ENCODE measurements at regions of chr4 and their contacts with region 1.

Region 1: DNA sequence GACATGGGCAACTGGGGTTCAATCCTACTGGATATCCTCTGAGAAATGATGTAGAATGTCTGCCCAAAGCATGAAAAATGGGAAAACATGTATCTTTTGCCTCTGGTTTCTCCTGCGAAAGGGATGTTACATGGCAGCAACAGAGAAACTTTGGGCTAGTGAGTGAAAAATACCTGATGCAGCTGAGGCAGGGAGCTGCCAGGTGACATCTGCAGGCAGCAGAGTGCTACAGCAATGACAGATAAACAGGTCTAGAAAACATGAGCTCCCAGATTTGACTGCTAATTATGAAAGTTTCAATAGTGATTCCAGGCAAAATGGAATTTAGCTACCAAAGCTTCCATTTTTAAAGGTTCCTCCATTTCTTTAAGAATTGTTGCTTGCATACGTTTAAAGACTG is 4.8 kb upstream of the CXCL1 start:
- DNase-seq: no peak
- H3K4me3 ChIP-seq: no peak overlapping the region
- H3K27ac ChIP-seq: no peak overlapping the region
- H3K4me1 ChIP-seq: peaks cover 0 to 4% (median 0%) of the 10 kb centered on the region in 4 experiments; a peak in 1 of 7 replicates
- H3K27me3 ChIP-seq: peaks cover 0 to 10% (median 6%) of the 10 kb centered on the region in 4 experiments; a peak in 6 of 7 replicates
- CTCF ChIP-seq: peak; percentile 67 to 81 (median 68)
- EP300 ChIP-seq: no peak
- POLR2A ChIP-seq: no peak
- RAD21 ChIP-seq: peak; percentile 67 to 79

Region 2: DNA sequence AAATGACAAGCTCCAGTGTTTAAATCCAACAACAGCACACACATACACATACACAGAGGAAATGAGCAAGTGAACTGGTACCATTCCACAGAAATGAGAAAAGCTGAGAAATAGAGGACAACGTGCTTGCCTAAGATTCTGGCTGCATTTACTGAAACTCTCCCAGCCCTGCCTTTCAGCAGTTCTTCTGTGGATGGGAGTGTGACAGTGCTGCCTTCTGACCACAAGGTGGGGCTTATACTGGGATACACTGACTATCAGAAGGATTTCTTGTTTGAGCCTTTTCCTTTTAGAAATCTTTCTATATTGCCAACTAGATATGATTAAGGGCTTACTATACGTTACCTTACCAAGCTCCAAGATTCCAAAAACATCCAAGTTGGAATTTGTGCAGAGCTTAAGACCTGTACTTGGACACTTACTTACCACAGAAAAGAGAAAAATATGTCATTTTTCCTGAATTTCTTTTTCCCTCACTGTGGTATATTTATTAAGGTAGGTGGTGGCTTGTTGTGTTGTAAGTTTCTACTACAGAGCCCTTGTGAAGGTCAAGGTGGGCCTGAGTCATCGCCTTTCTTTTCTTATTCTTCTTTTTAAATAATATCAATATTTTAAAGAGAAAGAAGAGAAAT is 134.7 kb before region 1 on chr4:
- CTCF ChIA-PET with region 1: interaction called, 21 read pairs
- POLR2A ChIA-PET with region 1: no interaction called
- DNase-seq: no peak
- H3K4me3 ChIP-seq: no peak overlapping the region
- H3K27ac ChIP-seq: no peak overlapping the region
- H3K4me1 ChIP-seq: peaks cover 0 to 2% (median 0%) of the 10 kb centered on the region in 4 experiments; a peak in 1 of 7 replicates
- H3K27me3 ChIP-seq: no peaks in the 10 kb centered on the region
- CTCF ChIP-seq: peak; percentile 62 to 86 (median 75)
- EP300 ChIP-seq: no peak
- POLR2A ChIP-seq: no peak
- RAD21 ChIP-seq: peak; percentile 65 to 80

Region 3: GRCh38 chr4:73847526-73848182 is 16.7 kb before region 1 on chr4:
- CTCF ChIA-PET with region 1: interaction called, 40 read pairs
- POLR2A ChIA-PET with region 1: no interaction called
- DNase-seq: no peak
- H3K4me3 ChIP-seq: no peak overlapping the region
- H3K27ac ChIP-seq: no peak overlapping the region
- H3K4me1 ChIP-seq: 0 out of 7 replicates have a peak, but pooled peaks cover 0 to 3% (median 0%) of the 10 kb centered on the region in 4 experiments
- H3K27me3 ChIP-seq: no peaks in the 10 kb centered on the region
- CTCF ChIP-seq: no peak
- EP300 ChIP-seq: no peak
- POLR2A ChIP-seq: no peak
- RAD21 ChIP-seq: no peak

Region 4: GRCh38 chr4:73853246-73853704 is 11.1 kb before region 1 on chr4 and contains the start of gene PF4V1:
- CTCF ChIA-PET with region 1: interaction called, 40 read pairs
- POLR2A ChIA-PET with region 1: no interaction called
- DNase-seq: peak in 1 of 2 experiments; percentile 55
- H3K4me3 ChIP-seq: peak within 1 kb of the TSS in 1 of 4 experiments; percentile 18; a peak in 1 of 8 replicates
- H3K27ac ChIP-seq: no peak within 1 kb of the TSS
- H3K4me1 ChIP-seq: 0 out of 7 replicates have a peak, but pooled peaks cover 0 to 3% (median 0%) of the 10 kb centered on the region in 4 experiments
- H3K27me3 ChIP-seq: no peaks in the 10 kb centered on the region
- CTCF ChIP-seq: peak in 2 of 3 experiments; percentile 6 to 28; a peak in 2 of 4 replicates
- EP300 ChIP-seq: no peak
- POLR2A ChIP-seq: no peak
- RAD21 ChIP-seq: peak in 1 of 2 experiments; percentile 8; a peak in 2 of 4 replicates
- total RNA-seq, gene PF4V1: not detected in 2 replicates

Region 5: GRCh38 chr4:74157561-74158465 is 293.4 kb after region 1 on chr4 and contains the start of gene MTHFD2L:
- CTCF ChIA-PET with region 1: no interaction called
- POLR2A ChIA-PET with region 1: no interaction called
- DNase-seq: peak; percentile 85 to 93
- H3K4me3 ChIP-seq: peak within 1 kb of the TSS; percentile 72 to 82 (median 78)
- H3K27ac ChIP-seq: peak within 1 kb of the TSS; percentile 51; the same call in 1 of the 2 replicates
- H3K4me1 ChIP-seq: peaks cover 0 to 4% (median 2%) of the 10 kb centered on the region in 4 experiments; a peak in 2 of 7 replicates
- H3K27me3 ChIP-seq: no peaks in the 10 kb centered on the region
- CTCF ChIP-seq: no peak
- EP300 ChIP-seq: peak in 1 of 2 experiments; percentile 24; a peak in 1 of 3 replicates
- POLR2A ChIP-seq: peak; percentile 87 to 90
- RAD21 ChIP-seq: 0 out of 4 replicates have a peak, but pooled peaks of 1 of the 2 experiments have one; percentile 1
- total RNA-seq, gene MTHFD2L: 11.0 and 15.0 TPM in 2 replicates